ENCODE measurements at regions of chr15 and their contacts with region 1.

Region 1: DNA sequence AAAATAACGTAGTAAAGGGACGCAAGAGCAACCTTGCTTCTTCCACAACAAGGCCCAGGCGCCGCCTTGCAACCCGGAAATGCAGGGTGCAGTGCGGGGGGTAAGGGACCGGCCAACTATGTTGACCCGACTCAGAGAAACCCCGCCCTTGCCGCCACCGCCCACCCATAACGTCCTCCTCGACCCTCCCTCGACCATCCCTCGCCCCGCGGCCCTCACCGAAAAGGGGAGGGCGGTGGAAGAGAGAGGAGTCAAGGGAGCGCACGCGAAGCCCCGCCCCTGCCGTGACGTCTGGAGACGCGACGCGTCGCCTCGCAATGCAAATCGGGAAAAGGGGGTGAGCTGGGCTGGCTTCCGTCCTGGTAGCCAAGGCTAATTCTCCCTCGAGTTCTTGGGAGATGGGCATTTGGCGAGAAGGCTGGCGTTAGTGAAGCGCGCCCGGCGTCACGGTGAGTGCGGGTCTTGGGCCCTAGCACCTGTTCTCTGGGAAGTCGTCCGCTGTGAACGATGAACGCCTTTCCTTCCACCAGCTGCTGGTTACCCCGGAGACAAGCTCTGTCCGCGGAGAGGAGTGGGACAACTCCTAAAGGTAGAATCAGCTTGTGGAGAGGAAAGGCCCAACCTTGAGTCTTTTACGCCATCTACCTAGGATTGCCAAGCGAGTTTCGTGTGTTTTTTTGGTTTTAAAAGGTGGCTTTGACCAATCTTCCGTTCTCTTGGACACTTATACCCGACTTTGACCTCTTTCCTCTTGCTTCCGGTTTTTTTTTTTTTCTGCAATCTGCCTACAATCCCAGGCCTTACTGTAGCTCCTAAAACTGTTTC is at the start of gene USP8:
- DNase-seq: peak; percentile 98 to 99
- H3K4me3 ChIP-seq: peak within 1 kb of the TSS; percentile 65
- H3K4me3 Mint-ChIP-seq: peak within 1 kb of the TSS; percentile 98
- H3K27ac Mint-ChIP-seq: peak within 1 kb of the TSS; percentile 97
- H3K4me1 ChIP-seq: 0 out of 2 replicates have a peak, but pooled peaks cover 4% of the 10 kb centered on the region
- H3K4me1 Mint-ChIP-seq: no peaks in the 10 kb centered on the region
- H3K27me3 ChIP-seq: no peaks in the 10 kb centered on the region
- H3K27me3 Mint-ChIP-seq: no peaks in the 10 kb centered on the region
- CTCF ChIP-seq: no peak
- total RNA-seq, gene USP8: 46.7 and 56.2 TPM in 2 replicates

Region 2: DNA sequence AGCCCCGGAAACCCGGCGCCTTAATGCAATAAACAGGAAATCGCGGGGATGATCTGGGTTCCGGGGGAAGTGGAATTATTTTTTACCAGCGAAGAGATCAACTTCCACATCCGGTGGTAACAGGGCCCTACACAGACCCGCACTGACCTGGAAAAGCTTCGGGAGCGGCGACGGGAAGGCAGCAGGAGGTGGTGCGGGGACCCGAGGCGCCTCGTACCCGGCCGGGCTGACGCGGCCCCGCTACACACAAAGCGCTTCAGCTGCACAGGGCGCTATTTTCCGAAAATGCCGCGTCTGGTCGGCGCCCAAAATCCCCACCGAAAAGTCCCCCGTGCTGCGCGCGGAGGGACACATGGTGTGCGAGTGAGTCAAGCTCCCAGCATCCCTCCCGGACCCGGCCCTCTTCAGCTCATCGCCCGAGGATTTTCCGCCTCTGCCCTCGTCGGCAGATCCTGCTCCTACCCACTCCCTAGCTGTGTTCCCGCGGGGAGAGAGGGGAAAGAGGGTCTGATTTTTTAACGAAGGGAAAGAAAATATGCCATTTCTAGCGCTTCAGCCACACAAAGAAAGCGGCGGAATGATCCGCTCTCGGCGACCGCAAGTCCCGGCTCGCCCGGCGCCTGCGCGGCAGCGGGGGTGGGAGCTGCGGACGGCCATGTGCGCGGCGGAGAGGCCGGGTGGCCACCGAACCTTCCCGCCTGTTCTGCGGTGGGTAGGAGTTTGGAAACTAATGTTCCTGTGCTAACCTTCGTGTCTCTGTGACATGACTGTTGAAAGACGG is 69.2 kb before region 1 on chr15 and contains the start of gene GABPB1:
- CTCF ChIA-PET with region 1: no interaction called
- POLR2A ChIA-PET with region 1: interaction called, 21 read pairs
- intact Hi-C with region 1: loop called (anchors 1 kb)
- DNase-seq: peak; percentile 86 to 91
- H3K4me3 ChIP-seq: peak within 1 kb of the TSS; percentile 91
- H3K4me3 Mint-ChIP-seq: peak within 1 kb of the TSS; percentile 93
- H3K27ac Mint-ChIP-seq: peak within 1 kb of the TSS; percentile 97
- H3K4me1 ChIP-seq: peaks cover 16% of the 10 kb centered on the region
- H3K4me1 Mint-ChIP-seq: peaks cover 28% of the 10 kb centered on the region
- H3K27me3 ChIP-seq: no peaks in the 10 kb centered on the region
- H3K27me3 Mint-ChIP-seq: no peaks in the 10 kb centered on the region
- CTCF ChIP-seq: no peak
- total RNA-seq, gene GABPB1: 42.8 and 44.7 TPM in 2 replicates

Region 3: DNA sequence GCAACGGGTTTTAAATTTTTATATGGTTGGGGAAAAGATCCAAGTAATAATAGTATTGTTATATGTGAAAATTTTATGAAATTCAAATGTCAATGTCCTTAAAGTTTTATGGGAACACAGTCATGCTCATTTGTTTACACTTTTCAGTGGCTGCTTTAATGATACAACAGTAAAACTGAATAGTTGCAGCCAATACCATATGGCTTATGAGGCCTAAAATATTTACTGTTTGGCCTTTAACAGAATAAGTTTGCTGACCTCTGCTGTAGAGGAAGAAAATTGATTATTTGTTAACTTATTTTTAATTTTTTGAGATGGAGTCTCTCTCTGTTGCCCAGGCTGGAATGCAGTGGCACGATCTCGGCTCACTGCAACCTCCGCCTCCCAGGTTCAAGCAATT is 77.5 kb after region 1 on chr15:
- CTCF ChIA-PET with region 1: no interaction called
- POLR2A ChIA-PET with region 1: interaction called, 10 read pairs
- intact Hi-C with region 1: no loop called
- DNase-seq: no peak
- H3K4me3 ChIP-seq: no peak overlapping the region
- H3K4me3 Mint-ChIP-seq: no peak overlapping the region
- H3K27ac Mint-ChIP-seq: no peak overlapping the region
- H3K4me1 ChIP-seq: no peaks in the 10 kb centered on the region
- H3K4me1 Mint-ChIP-seq: no peaks in the 10 kb centered on the region
- H3K27me3 ChIP-seq: no peaks in the 10 kb centered on the region
- H3K27me3 Mint-ChIP-seq: no peaks in the 10 kb centered on the region
- CTCF ChIP-seq: no peak

Region 4: DNA sequence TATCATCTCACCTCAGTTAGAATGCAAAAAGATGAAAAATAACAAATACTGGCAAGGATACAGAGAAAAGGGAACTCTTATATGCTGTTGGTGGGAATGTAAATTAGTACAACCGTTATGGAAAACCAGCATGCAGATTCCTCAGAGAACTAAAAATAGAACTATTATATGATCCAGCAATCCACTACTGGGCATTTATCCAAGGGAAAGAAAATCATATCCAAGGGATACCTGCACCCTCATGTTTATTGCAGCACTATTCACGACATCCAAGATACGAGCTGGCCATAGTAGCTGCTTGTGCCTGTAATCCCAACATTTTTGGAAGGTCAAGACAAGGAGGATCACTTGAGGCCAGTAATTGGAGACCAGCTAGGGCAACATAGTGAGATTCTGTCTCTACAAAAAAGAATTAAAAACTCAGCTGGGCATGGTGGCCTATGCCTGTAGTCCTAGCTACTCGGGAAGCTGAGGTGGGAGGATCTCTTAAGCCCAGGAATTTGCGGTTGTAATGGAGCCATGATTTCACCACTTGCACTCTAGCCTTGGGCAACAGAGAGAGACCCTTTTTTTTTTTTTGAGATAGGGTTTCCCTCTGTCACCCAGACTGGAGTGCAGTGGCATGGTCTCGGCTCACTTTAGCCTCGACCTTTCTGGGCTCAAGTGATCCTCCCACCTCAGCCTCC is 95.6 kb after region 1 on chr15:
- CTCF ChIA-PET with region 1: no interaction called
- POLR2A ChIA-PET with region 1: no interaction called
- intact Hi-C with region 1: no loop called
- DNase-seq: no peak
- H3K4me3 ChIP-seq: no peak overlapping the region
- H3K4me3 Mint-ChIP-seq: no peak overlapping the region
- H3K27ac Mint-ChIP-seq: no peak overlapping the region
- H3K4me1 ChIP-seq: no peaks in the 10 kb centered on the region
- H3K4me1 Mint-ChIP-seq: no peaks in the 10 kb centered on the region
- H3K27me3 ChIP-seq: no peaks in the 10 kb centered on the region
- H3K27me3 Mint-ChIP-seq: no peaks in the 10 kb centered on the region
- CTCF ChIP-seq: no peak

Region 5: GRCh38 chr15:50686468-50687301 is 262.4 kb after region 1 on chr15 and contains the start of gene TRPM7:
- CTCF ChIA-PET with region 1: no interaction called
- POLR2A ChIA-PET with region 1: no interaction called
- intact Hi-C with region 1: no loop called
- DNase-seq: peak; percentile 83 to 91
- H3K4me3 ChIP-seq: peak within 1 kb of the TSS; percentile 87
- H3K4me3 Mint-ChIP-seq: peak within 1 kb of the TSS; percentile 85
- H3K27ac Mint-ChIP-seq: peak within 1 kb of the TSS; percentile 98
- H3K4me1 ChIP-seq: peaks cover under 1% of the 10 kb centered on the region; the same call in 1 of the 2 replicates
- H3K4me1 Mint-ChIP-seq: peaks cover 13% of the 10 kb centered on the region
- H3K27me3 ChIP-seq: no peaks in the 10 kb centered on the region
- H3K27me3 Mint-ChIP-seq: no peaks in the 10 kb centered on the region
- CTCF ChIP-seq: peak in 1 of 2 experiments; percentile 5
- total RNA-seq, gene TRPM7: 70.9 and 73.4 TPM in 2 replicates

Measured in Caco-2 (cell line).